Activated CD4-positive, alpha-beta memory T cell treated with anti-CD3 and anti-CD28 coated beads for 36 hours (primary cell): ENCODE measurements at regions of chr11 and their contacts with region 1.

Region 1: DNA sequence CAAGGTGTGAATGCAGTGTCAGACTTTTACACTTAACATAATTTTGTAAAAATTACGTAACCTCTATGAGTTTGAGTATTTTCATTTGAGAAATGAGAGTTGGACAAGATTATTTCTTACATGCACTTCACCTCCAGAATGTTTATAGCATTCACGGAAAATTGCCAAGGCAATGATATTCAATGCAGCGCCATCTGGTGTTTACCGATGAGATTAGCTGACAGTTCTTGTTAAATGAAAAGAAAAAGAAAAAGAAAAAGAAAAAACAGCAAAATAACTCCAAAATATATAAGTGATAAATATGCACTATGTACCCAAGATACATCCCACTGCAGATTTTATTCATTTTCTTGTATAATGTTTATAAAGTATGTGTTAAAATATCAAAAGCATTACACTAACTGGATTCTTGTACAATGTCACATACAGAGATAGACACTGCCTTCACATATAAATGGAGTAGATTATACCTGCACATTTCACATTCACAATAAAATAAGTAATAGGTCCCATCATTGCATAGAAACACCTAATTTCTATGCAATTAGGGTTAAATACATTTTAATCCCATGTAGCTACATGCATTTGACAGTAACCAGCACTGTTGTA is 976.3 kb upstream of the FAT3 start:
- DNase-seq: peak; percentile 13
- H3K4me3 Mint-ChIP-seq: no peak overlapping the region
- H3K27ac Mint-ChIP-seq: no peak overlapping the region
- H3K4me1 Mint-ChIP-seq: no peaks in the 10 kb centered on the region
- H3K27me3 Mint-ChIP-seq: no peaks in the 10 kb centered on the region

Region 2: DNA sequence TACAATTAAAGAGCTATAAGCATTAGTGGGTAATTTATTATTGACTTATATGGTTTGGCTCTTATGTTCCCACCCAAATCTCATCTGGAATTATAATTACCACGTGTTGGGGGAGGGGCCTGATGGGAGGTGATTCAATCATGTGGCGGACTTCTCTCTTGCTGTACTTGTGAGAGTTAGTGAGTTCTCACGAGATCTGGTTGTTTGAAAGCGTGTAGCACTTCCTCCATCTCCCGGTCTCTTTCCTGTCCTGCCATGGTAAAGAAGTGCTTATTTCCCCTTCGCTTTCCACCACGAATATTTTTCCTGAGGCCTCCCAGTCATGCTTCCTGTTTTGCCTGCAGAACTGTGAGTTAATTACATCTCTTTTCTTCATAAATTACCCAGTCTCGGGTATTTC is 997.3 kb before region 1 on chr11:
- CTCF ChIA-PET with region 1: no interaction called
- POLR2A ChIA-PET with region 1: no interaction called
- intact Hi-C with region 1: loop called (anchors 1 kb)
- DNase-seq: peak; percentile 25
- H3K4me3 Mint-ChIP-seq: peak overlapping the region; percentile 68
- H3K27ac Mint-ChIP-seq: no peak overlapping the region
- H3K4me1 Mint-ChIP-seq: peaks cover 13% of the 10 kb centered on the region
- H3K27me3 Mint-ChIP-seq: no peaks in the 10 kb centered on the region

Region 3: DNA sequence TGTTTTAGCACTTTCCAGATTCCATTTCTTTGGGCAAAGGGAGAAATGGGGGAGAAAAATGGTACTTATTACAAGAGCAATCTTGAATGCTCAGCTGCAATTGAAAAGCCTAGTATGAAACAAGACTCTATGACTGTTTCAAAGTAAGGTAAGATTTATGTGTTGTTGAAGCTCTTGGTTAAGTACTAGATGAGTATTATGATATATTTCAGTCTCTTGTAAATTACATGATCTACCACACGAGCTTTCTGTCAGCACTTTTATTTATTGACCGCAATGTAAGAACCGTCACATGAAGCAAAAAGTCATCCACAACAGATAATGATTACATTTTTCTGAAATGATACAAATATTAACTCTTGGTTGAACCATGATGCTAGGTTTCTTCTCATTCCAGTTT is 118.7 kb before region 1 on chr11:
- CTCF ChIA-PET with region 1: no interaction called
- POLR2A ChIA-PET with region 1: no interaction called
- intact Hi-C with region 1: no loop called
- DNase-seq: no peak
- H3K4me3 Mint-ChIP-seq: no peak overlapping the region
- H3K27ac Mint-ChIP-seq: no peak overlapping the region
- H3K4me1 Mint-ChIP-seq: no peaks in the 10 kb centered on the region
- H3K27me3 Mint-ChIP-seq: no peaks in the 10 kb centered on the region